Mammary epithelial cell (primary cell): ENCODE measurements at regions of chr1 and their contacts with region 1.

Region 1: GRCh38 chr1:234647245-234647644 is 37.3 kb upstream of the IRF2BP2 start:
- DNase-seq: no peak
- H3K4me3 ChIP-seq: no peak overlapping the region
- H3K27ac ChIP-seq: peak overlapping the region; percentile 65
- H3K4me1 ChIP-seq: peaks cover 33% of the 10 kb centered on the region
- H3K27me3 ChIP-seq: no peaks in the 10 kb centered on the region
- CTCF ChIP-seq: no peak

Region 2: DNA sequence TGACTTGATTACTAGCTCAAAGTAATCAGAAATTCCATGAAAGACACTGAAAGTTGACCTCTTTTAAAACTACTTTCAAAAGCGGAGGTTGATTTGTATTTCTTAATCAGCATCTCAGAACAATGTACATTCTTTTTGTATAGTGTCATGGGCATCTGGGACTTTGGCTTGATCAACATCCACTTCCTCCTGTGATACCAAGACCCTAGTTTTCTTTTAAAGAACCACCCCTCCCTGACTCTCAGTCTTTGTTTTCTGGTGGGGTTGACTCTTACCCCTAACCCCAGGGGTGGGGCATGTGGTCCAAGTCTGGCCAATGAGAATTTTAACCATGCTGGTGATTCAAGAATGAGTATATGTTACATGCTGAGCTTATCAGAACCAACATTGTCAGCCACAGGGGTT is 15.5 kb before region 1 on chr1:
- CTCF ChIA-PET with region 1: no interaction called
- dilution Hi-C with region 1: no loop called
- in situ Hi-C with region 1: no loop called
- intact Hi-C with region 1: loop called (anchors 2 kb)
- DNase-seq: peak; percentile 94
- H3K4me3 ChIP-seq: no peak overlapping the region
- H3K27ac ChIP-seq: peak overlapping the region; percentile 82
- H3K4me1 ChIP-seq: peaks cover 18% of the 10 kb centered on the region
- H3K27me3 ChIP-seq: no peaks in the 10 kb centered on the region
- CTCF ChIP-seq: no peak